A673 (cell line): ENCODE measurements at regions of chr2 and their contacts with region 1.

Region 1: GRCh38 chr2:191582355-191582754 is 95.6 kb upstream of the NABP1 start:
- DNase-seq: no peak
- H3K4me3 ChIP-seq: no peak overlapping the region
- H3K27ac ChIP-seq: no peak overlapping the region
- H3K4me1 ChIP-seq: no peaks in the 10 kb centered on the region
- H3K27me3 ChIP-seq: no peaks in the 10 kb centered on the region
- CTCF ChIP-seq: no peak

Region 2: DNA sequence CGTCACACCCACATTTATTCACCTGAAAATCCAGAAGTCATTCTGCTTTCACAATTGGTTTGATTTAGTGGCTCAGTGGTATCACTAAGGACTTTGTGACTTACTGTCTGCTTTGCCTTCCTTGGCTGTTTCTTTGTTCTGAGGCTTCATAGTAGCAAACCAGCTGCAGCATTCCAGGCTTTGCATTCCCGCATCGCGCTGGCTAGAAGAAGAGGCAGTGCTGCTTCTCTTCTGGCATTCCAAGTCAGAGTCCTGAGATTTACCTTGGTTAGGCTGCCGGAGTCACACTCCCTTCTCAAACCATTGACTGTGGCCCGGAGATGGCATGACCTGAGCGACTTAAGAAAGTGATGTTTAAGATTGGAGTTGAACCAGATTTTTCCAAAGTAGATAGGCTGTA is 302.1 kb before region 1 on chr2:
- CTCF ChIA-PET with region 1: no interaction called
- POLR2A ChIA-PET with region 1: no interaction called
- intact Hi-C with region 1: no loop called
- DNase-seq: no peak
- H3K4me3 ChIP-seq: no peak overlapping the region
- H3K27ac ChIP-seq: no peak overlapping the region
- H3K4me1 ChIP-seq: no peaks in the 10 kb centered on the region
- H3K27me3 ChIP-seq: no peaks in the 10 kb centered on the region
- CTCF ChIP-seq: no peak

Region 3: GRCh38 chr2:191601060-191601459 is 18.7 kb after region 1 on chr2:
- CTCF ChIA-PET with region 1: no interaction called
- POLR2A ChIA-PET with region 1: interaction called, 11 read pairs
- intact Hi-C with region 1: no loop called
- DNase-seq: no peak
- H3K4me3 ChIP-seq: no peak overlapping the region
- H3K27ac ChIP-seq: no peak overlapping the region
- H3K4me1 ChIP-seq: no peaks in the 10 kb centered on the region
- H3K27me3 ChIP-seq: no peaks in the 10 kb centered on the region
- CTCF ChIP-seq: no peak

Region 4: GRCh38 chr2:191650896-191651773 is 68.8 kb after region 1 on chr2:
- CTCF ChIA-PET with region 1: no interaction called
- POLR2A ChIA-PET with region 1: no interaction called
- intact Hi-C with region 1: no loop called
- DNase-seq: no peak
- H3K4me3 ChIP-seq: no peak overlapping the region
- H3K27ac ChIP-seq: no peak overlapping the region
- H3K4me1 ChIP-seq: no peaks in the 10 kb centered on the region
- H3K27me3 ChIP-seq: no peaks in the 10 kb centered on the region
- CTCF ChIP-seq: no peak

Region 5: GRCh38 chr2:192236136-192236535 is 653.8 kb after region 1 on chr2:
- CTCF ChIA-PET with region 1: no interaction called
- POLR2A ChIA-PET with region 1: no interaction called
- intact Hi-C with region 1: no loop called
- DNase-seq: no peak
- H3K4me3 ChIP-seq: no peak overlapping the region
- H3K27ac ChIP-seq: no peak overlapping the region
- H3K4me1 ChIP-seq: no peaks in the 10 kb centered on the region
- H3K27me3 ChIP-seq: no peaks in the 10 kb centered on the region
- CTCF ChIP-seq: no peak